OCI-LY7 (cell line): ENCODE measurements at regions of chr10 and their contacts with region 1.

Region 1: GRCh38 chr10:114304017-114304570 is 65.0 kb downstream of the VWA2 start:
- DNase-seq: peak; percentile 91
- H3K4me3 ChIP-seq: peak overlapping the region; percentile 74
- H3K27ac ChIP-seq: peak overlapping the region; percentile 55
- H3K4me1 ChIP-seq: peaks cover 5% of the 10 kb centered on the region
- CTCF ChIP-seq: peak; percentile 90

Region 2: GRCh38 chr10:114412907-114413386 is 108.9 kb after region 1 on chr10:
- CTCF ChIA-PET with region 1: no interaction called
- POLR2A ChIA-PET with region 1: no interaction called
- intact Hi-C with region 1: no loop called
- DNase-seq: no peak
- H3K4me3 ChIP-seq: no peak overlapping the region
- H3K27ac ChIP-seq: no peak overlapping the region
- H3K4me1 ChIP-seq: no peaks in the 10 kb centered on the region
- CTCF ChIP-seq: no peak

Region 3: DNA sequence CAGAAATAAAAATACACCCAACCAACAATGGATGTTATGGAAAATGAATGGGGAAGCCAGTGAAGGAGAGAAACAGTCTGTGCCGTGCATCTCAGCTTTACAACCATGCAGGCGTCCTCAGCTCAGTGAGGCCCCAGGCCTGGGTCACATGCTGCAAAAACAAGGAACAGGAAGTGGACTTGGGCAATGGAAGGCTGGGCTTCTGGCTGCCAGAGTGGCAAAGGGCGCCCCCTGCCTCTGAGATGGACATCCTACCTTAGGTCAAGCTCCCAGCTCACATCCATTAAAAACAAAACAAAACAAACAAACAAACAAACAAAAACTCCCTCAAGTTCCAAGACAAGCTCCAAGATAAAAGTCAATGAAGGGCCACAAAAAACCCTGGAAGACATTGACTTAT is 154.9 kb after region 1 on chr10:
- CTCF ChIA-PET with region 1: no interaction called
- POLR2A ChIA-PET with region 1: no interaction called
- intact Hi-C with region 1: loop called (anchors 5 kb)
- DNase-seq: peak; percentile 24
- H3K4me3 ChIP-seq: no peak overlapping the region
- H3K27ac ChIP-seq: no peak overlapping the region
- H3K4me1 ChIP-seq: no peaks in the 10 kb centered on the region
- CTCF ChIP-seq: peak; percentile 72

Region 4: GRCh38 chr10:114526504-114527238 is 222.6 kb after region 1 on chr10:
- CTCF ChIA-PET with region 1: no interaction called
- POLR2A ChIA-PET with region 1: interaction called, 3 read pairs
- intact Hi-C with region 1: loop called (anchors 1 kb)
- DNase-seq: peak; percentile 98
- H3K4me3 ChIP-seq: peak overlapping the region; percentile 89
- H3K27ac ChIP-seq: peak overlapping the region; percentile 91
- H3K4me1 ChIP-seq: peaks cover 35% of the 10 kb centered on the region
- CTCF ChIP-seq: no peak

Region 5: DNA sequence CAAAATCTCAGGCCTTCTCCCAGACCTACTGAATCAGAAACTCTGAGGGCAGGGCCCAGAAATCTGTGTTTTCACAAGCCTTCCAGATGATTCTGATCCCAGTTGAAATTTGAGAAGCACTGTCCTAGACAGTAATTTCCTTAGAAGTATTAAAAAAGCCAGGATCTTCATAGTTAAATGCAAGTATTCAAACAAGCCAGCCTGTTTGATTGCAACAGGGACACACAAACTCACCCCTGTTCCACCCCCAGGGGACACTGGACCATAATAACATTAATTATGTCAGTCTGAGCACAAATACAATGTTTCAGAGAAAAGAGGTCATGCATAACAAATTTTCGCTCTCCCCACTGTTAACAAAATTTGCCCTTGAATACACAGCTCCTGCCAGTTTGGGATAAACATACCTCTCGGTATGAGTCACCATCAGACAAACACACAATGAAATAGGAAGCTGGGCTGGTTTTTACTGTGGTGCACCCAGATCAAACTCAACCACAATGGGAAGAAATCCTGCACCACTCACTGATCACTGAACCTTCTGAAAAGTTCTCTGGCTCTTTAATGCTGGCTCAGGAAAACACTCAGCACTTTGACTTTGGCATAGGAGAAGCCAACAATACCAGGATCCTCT is 319.7 kb after region 1 on chr10:
- CTCF ChIA-PET with region 1: no interaction called
- POLR2A ChIA-PET with region 1: no interaction called
- intact Hi-C with region 1: no loop called
- DNase-seq: no peak
- H3K4me3 ChIP-seq: no peak overlapping the region
- H3K27ac ChIP-seq: no peak overlapping the region
- H3K4me1 ChIP-seq: no peaks in the 10 kb centered on the region
- CTCF ChIP-seq: no peak

Region 6: GRCh38 chr10:114694752-114695151 is 390.7 kb after region 1 on chr10:
- CTCF ChIA-PET with region 1: interaction called, 4 read pairs
- POLR2A ChIA-PET with region 1: interaction called, 4 read pairs
- intact Hi-C with region 1: loop called (anchors 2 kb)
- DNase-seq: peak; percentile 38
- H3K4me3 ChIP-seq: no peak overlapping the region
- H3K27ac ChIP-seq: no peak overlapping the region
- H3K4me1 ChIP-seq: no peaks in the 10 kb centered on the region
- CTCF ChIP-seq: peak; percentile 83

Region 7: GRCh38 chr10:114783686-114784085 is 479.6 kb after region 1 on chr10:
- CTCF ChIA-PET with region 1: no interaction called
- POLR2A ChIA-PET with region 1: no interaction called
- intact Hi-C with region 1: loop called (anchors 2 kb)
- DNase-seq: no peak
- H3K4me3 ChIP-seq: no peak overlapping the region
- H3K27ac ChIP-seq: no peak overlapping the region
- H3K4me1 ChIP-seq: no peaks in the 10 kb centered on the region
- CTCF ChIP-seq: no peak